ENCODE measurements at regions of chr4 and their contacts with region 1.

Region 1: DNA sequence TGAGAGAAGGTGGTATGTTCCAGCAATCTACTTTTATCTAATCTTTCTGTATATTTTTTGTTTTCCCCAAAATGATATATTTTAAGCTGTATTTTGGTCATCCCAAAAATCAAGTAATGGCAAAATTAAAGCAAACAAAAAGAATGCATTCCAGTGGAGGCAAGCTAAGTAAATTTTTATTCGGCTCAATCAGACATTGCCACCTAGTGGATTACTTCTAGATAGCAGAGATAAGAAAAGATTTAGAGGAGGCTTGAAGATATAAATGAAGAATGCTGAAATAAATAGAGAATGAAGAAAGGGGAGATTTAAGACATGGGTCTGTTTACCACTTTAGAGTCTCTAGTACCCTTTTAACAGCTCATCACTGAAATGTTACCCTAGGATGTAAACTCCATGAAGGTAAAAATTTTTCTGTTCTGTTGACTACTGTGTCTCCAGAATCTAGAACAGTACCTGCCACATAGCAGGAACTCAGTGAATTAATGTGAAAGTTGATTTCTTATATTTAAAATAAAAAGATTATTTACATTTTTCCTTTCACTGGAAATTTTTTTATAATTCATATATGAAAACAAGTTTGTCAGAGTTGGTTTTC is 110.9 kb upstream of the ANK2 start:
- DNase-seq: peak; percentile 73
- H3K4me3 ChIP-seq: no peak overlapping the region
- H3K27ac ChIP-seq: no peak overlapping the region
- H3K4me1 ChIP-seq: no peaks in the 10 kb centered on the region
- H3K27me3 ChIP-seq: no peaks in the 10 kb centered on the region

Region 2: DNA sequence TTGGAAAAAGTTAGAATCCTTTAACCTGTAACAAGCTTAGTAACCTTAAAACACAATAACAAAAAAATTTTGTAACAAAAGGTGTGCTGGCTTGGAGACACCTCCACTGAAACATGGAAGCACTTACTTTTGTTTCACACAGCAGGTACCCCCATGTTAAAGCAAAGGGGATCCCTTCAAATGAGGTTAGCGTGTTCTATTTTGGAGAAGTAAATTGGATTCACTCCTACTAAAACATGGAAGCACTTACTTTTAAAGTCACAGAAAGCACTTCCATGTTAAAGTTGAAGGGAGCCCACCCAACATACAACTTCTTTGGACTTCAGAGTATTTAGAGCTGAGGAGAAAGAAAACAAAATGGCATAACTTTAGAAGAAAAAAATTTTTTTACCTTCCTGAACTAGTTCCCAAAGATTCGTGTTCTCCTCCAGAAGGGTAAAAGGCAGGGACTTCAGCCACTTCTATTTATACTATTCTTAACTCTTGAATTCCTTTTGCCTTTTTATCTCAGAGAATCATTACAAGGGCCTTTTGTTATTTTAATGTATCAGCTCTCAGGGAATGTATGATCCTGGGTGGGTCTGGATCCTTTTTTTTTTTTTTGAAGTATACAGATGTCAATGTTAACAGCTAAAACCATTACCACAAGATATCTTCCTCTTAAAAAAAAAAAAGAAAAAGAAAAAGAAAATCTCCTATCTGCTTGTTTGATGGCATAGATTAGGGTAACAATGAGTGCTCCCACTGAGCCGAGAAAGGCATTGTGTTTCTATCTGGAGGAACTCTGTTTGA is 290.1 kb before region 1 on chr4:
- in situ Hi-C with region 1: loop called (anchors 10 kb)
- DNase-seq: no peak
- H3K4me3 ChIP-seq: no peak overlapping the region
- H3K27ac ChIP-seq: no peak overlapping the region
- H3K4me1 ChIP-seq: no peaks in the 10 kb centered on the region
- H3K27me3 ChIP-seq: no peaks in the 10 kb centered on the region

Region 3: GRCh38 chr4:112765317-112765975 is 173.1 kb before region 1 on chr4:
- in situ Hi-C with region 1: loop called (anchors 5 kb)
- DNase-seq: peak; percentile 34
- H3K4me3 ChIP-seq: no peak overlapping the region
- H3K27ac ChIP-seq: no peak overlapping the region
- H3K4me1 ChIP-seq: peaks cover 3% of the 10 kb centered on the region; the same call in 1 of the 2 replicates
- H3K27me3 ChIP-seq: no peaks in the 10 kb centered on the region

Region 4: DNA sequence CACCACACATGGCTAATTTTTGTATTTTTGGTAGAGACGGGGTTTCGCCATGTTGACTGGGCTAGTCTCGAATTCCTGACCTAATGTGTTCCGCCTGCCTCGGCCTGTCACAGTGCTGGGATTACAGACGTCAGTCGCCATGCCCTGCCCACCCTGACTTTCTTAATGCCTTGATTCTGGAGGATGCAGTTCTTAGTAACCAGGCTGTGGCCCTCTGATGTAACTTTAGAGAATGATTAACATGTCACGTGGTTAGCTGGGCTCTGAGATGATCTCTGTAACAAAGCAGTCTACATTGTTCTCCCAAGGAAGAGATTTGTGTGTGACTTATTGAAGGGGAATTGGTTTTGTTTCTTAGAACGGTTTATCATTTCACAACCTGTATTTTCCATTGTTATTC is 141.5 kb after region 1 on chr4:
- in situ Hi-C with region 1: no loop called
- DNase-seq: peak; percentile 66
- H3K4me3 ChIP-seq: no peak overlapping the region
- H3K27ac ChIP-seq: no peak overlapping the region
- H3K4me1 ChIP-seq: no peaks in the 10 kb centered on the region
- H3K27me3 ChIP-seq: no peaks in the 10 kb centered on the region

Region 5: DNA sequence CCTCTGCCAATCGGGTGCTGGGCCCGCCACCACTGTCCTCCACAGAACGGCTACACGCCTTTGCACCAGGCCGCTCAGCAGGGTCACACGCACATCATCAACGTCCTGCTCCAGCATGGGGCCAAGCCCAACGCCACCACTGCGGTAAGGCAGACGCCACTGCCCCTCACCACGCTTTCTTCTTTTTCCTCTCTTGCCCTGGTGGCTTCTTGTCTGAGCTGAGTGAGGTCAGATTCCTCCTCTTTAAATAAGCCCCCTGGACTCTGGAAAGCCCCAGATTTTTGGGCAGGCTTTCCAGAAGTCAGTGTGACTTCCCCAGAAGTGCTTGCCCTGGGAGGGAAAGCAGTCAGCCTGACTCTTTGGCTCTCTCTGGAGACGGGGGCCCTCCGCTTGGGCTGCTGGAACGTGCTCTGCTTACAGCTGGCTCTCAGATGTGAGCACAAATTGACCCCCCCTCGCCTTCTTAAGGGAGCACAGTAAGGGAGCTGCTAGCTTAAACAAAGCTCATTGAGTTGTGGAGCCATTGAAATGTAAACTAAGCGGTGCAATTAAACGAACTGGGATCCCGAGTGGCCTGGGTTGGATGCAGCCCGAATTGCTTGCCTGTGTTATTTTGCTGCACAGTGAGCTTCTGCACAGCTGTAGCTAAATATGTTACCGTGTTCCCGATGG is 353.9 kb after region 1 on chr4:
- in situ Hi-C with region 1: no loop called
- DNase-seq: peak; percentile 53
- H3K4me3 ChIP-seq: peak overlapping the region; percentile 64
- H3K27ac ChIP-seq: peak overlapping the region; percentile 75
- H3K4me1 ChIP-seq: peaks cover 32% of the 10 kb centered on the region
- H3K27me3 ChIP-seq: no peaks in the 10 kb centered on the region